ENCODE measurements at regions of chr1 and their contacts with region 1.

Region 1: GRCh38 chr1:155244368-155245162 is 10.7 kb downstream of the ENTREP3 start:
- DNase-seq: peak; percentile 99
- H3K4me3 ChIP-seq: peak overlapping the region; percentile 64 to 70 (median 68)
- H3K27ac ChIP-seq: peak overlapping the region; percentile 54
- H3K4me1 ChIP-seq: peaks cover 21% of the 10 kb centered on the region
- H3K27me3 ChIP-seq: no peaks in the 10 kb centered on the region
- CTCF ChIP-seq: peak in 1 of 2 donors; percentile 24

Region 2: DNA sequence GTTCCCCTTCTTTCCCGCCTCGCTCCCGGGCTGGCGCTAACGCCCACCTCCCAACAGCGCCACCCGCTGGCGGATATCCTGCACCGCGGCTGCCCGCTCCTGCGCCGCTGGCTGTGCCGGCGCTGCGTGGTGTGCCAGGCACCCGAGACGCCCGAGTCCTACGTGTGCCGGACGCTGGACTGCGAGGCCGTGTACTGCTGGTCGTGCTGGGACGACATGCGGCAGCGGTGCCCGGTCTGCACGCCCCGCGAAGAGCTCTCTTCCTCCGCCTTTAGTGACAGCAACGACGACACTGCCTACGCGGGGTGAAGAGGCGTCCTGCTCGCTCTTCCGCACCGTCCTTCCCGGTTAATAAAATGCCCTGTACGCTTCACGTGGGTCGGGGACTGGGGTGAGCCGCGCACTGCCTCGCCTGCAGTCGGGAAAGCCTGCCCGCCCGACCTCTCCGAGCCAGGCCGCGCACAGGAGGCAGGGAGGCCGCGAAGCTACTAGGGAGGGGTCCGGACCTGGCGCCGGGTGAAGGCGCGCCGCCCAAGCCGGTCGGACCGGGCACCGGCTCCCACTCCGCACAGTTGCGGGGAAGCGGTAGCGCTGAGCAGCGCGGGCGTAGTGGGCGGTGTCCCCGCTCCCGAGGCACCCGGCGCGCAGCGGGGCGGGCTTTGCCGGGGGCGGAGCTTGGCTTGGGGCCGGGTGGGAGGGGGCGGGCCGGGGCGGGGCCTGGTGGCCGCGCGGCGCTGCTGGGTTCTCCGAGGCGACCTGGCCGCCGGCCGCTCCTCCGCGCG is 193.8 kb before region 1 on chr1 and contains the start of gene ADAM15:
- CTCF ChIA-PET with region 1: no interaction called
- dilution Hi-C with region 1: no loop called
- in situ Hi-C with region 1: no loop called
- intact Hi-C with region 1: no loop called
- DNase-seq: peak; percentile 73
- H3K4me3 ChIP-seq: peak within 1 kb of the TSS; percentile 88 to 96 (median 90)
- H3K27ac ChIP-seq: peak within 1 kb of the TSS; percentile 63
- H3K4me1 ChIP-seq: peaks cover 31% of the 10 kb centered on the region
- H3K27me3 ChIP-seq: no peaks in the 10 kb centered on the region
- CTCF ChIP-seq: peak; percentile 72 to 95
- total RNA-seq, gene ADAM15: 111 to 127 TPM

Region 3: DNA sequence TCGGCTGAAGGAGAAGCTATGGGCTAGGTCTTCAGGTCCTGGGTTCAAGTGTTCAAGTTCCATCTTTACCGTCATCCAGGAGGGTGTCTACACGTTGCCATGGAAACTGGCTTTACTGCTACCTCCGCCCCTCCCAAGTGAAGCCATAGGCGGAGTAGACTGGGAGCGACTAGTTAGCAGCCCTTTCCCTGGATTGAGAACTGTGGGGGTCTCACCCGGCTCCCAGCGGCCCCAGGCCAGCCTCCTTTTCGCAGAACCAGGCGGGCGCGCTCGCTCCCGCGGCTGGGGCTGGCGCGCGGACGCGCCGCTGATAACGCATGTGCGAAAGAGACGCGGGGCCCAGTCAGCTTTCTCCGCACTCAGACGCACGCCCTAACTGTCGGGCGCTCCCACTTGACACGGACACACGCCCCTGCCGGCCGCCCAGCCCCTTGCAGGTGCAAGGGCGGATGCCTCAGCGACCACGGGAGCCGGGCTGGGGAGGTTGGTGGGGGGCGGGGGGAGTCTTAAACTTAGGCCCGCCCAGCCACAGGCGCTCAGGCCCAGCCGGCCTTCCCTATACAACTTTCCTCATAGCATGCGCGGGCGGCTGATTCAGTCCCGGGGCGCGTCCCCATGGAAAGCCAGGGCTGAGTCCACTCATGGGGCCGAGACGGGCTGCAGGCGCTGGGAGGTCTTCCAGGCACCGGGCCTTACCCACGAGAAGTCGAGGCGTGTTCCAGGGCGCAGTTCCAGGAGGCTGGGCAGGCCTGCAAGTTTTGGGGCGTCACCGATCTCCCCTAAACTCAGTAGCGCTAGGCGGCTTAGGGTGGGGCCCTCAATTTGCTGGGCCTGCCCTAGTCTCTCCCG is 173.6 kb before region 1 on chr1:
- CTCF ChIA-PET with region 1: no interaction called
- dilution Hi-C with region 1: no loop called
- in situ Hi-C with region 1: no loop called
- intact Hi-C with region 1: no loop called
- DNase-seq: no peak
- H3K4me3 ChIP-seq: peak overlapping the region in 1 of 3 experiments; percentile 24
- H3K27ac ChIP-seq: no peak overlapping the region
- H3K4me1 ChIP-seq: peaks cover 13% of the 10 kb centered on the region
- H3K27me3 ChIP-seq: no peaks in the 10 kb centered on the region
- CTCF ChIP-seq: peak in 1 of 2 donors; percentile 43

Region 4: DNA sequence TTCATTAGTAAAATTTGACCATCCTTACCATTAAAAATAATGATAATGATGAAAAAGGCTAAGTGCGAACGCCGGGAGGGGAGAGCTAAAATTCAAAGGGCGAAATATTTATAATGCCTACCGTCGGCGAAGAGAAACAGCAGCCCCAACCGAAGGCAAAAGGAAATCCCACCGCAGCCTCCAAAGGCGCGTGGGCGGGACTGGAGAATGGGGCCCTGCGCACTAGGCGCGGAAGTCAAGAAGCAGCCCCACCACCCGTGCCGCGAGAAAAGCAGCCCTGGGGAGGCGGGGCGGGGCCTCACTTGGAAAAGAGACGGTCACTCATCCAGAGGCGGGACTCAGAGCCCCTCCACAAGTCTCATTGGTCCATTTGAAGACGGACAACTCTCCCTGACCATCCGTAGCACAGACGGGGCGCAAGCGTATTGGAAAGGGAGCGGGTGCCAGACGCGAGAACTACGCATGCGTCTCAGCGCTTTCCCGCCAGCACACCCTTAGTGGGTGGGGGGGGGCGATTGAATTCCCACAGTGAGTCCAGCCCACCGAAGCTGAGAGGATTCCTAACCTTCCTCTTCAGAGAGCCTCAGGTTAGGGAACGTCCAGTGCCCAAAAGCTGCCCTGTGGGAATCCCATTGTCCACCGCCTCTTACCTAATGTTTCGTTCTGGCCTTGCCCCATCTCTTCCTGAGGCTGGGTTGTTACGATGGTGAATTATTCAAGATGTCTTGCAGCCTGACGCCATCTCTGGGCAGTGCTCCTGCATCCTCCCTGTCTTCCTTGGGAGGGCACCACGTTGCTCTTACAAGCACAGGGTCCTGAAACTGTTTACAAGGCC is 17.1 kb before region 1 on chr1:
- CTCF ChIA-PET with region 1: no interaction called
- dilution Hi-C with region 1: no loop called
- in situ Hi-C with region 1: no loop called
- intact Hi-C with region 1: loop called (anchors 2 kb)
- DNase-seq: peak; percentile 98
- H3K4me3 ChIP-seq: peak overlapping the region; percentile 71 to 93 (median 76)
- H3K27ac ChIP-seq: peak overlapping the region; percentile 69
- H3K4me1 ChIP-seq: peaks cover 25% of the 10 kb centered on the region
- H3K27me3 ChIP-seq: no peaks in the 10 kb centered on the region
- CTCF ChIP-seq: no peak

Region 5: GRCh38 chr1:155479205-155479604 is 234.6 kb after region 1 on chr1:
- CTCF ChIA-PET with region 1: no interaction called
- dilution Hi-C with region 1: loop called (anchors 5 kb)
- in situ Hi-C with region 1: no loop called
- intact Hi-C with region 1: no loop called
- DNase-seq: peak; percentile 32
- H3K4me3 ChIP-seq: no peak overlapping the region
- H3K27ac ChIP-seq: no peak overlapping the region
- H3K4me1 ChIP-seq: no peaks in the 10 kb centered on the region
- H3K27me3 ChIP-seq: no peaks in the 10 kb centered on the region
- CTCF ChIP-seq: no peak